ENCODE measurements at regions of chr7 and their contacts with region 1.

Region 1: DNA sequence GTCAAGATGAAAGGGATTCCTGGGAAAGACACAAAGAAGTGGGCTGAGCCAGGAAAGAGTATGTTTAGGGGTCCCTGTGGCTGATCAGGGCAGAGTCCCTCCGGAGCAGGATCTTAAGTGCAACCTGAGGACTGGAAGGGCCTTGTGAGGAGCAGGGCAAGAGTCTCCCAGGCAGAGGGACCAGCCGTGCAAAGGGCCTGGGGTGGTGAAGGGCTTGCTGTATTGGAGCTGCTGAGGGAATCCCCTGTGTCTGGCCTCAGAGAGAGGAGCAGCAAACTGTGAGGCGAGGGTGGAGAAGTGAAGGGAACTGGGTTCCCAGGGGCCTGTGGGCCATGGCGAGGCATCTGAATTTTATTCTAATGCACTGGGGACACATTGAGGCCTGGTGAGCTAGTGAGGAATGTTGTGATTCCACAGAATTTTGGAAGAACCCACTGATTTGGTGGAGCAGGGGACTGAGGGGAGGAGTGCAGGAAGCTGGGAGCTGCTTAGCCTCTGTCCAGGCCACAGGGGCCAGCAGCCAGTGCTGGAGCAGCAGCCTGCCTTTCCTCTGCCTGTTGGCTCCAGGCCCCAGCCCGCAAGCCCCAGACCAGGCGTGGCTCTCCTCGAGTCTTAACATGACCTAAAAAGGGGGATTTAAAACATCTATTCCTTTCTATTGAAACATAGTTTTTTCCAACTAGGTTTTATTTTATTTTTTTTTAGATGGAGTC is 138.4 kb upstream of the IGFBP3 start:
- DNase-seq: peak; percentile 93

Region 2: GRCh38 chr7:45580053-45580872 is 479.2 kb before region 1 on chr7:
- intact Hi-C with region 1: no loop called
- DNase-seq: peak; percentile 72

Region 3: DNA sequence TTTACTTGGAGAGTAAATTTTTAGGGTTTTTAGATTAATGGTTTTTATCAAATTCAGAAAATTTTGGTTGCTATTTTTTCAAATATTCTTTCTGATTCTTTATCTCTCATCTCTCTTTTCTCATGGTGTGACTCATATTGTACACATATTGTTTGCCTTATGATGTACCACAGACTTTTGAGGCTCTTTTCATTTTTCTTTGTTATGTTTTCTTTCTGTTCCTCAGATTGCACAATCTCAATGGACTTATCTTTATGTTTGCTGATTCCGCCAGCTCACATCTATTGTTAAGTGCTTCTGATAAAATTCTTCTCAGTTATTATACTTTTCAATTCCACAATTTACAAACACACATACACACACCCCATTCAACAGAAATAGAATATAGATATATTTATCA is 29.8 kb after region 1 on chr7:
- intact Hi-C with region 1: loop called in 1 of 2 experiments (anchors 2 kb)
- DNase-seq: no peak

Region 4: GRCh38 chr7:46229409-46229808 is 169.9 kb after region 1 on chr7:
- intact Hi-C with region 1: no loop called
- DNase-seq: no peak

Region 5: GRCh38 chr7:46411236-46411635 is 351.8 kb after region 1 on chr7:
- intact Hi-C with region 1: no loop called
- DNase-seq: no peak

Measured in posterior vena cava (tissue), 2 donors.